Activated T-helper 2 cell treated with anti-CD3 and anti-CD28 coated beads, Interferon-gamma antibody, Interleukin-2, Interleukin-4, amounts not matched to agents 10 μg/mL and 5 μg/mL and 100 μg/mL, durations not matched to agents 14 hours and 24 hours and 36 hours (primary cell): ENCODE measurements at regions of chr11 and their contacts with region 1.

Region 1: GRCh38 chr11:119067371-119068222 is at the start of gene VPS11:
- DNase-seq: peak; percentile 98
- H3K4me3 Mint-ChIP-seq: peak within 1 kb of the TSS; percentile 92
- H3K27ac Mint-ChIP-seq: peak within 1 kb of the TSS; percentile 97
- H3K4me1 Mint-ChIP-seq: peaks cover 23% of the 10 kb centered on the region
- H3K27me3 Mint-ChIP-seq: no peaks in the 10 kb centered on the region
- total RNA-seq, gene VPS11: 24.3 and 25.8 TPM in 2 replicates

Region 2: DNA sequence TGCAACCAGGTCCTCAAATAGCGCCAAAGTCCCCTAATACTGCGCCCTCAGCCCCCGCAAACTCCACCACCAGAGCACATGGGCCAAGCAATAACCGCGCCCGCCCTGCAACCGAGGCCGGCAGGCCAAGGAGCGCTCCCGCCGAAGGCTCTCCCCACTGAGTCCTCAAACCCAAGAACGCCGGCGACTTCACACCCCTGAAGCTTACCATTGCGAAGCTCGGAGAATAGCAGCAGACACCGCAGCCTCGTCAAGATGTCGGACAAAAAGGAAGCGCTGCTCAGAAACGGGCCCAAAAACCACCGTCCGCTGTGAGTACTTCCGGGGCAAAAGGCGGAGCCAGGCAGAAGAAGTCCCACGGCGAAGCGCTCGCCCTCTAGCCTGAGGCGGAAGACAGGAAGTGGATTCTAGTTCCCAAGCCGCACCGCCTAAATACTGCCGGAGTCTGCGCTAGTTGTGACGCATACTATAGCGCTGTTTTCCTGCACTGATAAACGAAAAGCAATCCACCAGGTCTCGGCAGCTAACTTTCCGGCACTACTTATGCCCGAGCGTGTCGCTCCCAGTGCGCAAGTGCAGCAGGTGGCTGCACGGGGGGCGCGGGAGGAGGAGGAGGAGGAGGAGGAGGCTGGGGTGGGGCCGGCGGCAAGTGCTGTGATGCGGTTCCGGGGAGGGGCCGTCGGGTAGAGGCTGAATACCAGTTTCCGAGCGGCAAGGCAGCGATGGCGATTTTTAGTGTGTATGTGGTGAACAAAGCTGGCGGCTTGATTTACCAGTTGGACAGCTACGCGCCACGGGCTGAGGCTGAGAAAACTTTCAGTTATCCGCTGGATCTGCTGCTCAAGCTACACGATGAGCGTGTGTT is 49.3 kb before region 1 on chr11 and contains the starts of genes RPS25 and TRAPPC4:
- intact Hi-C with region 1: loop called (anchors 1 kb)
- DNase-seq: peak; percentile 93
- H3K4me3 Mint-ChIP-seq: peak within 1 kb of the TSS; percentile 99
- H3K27ac Mint-ChIP-seq: peak within 1 kb of the TSS; percentile 100
- H3K4me1 Mint-ChIP-seq: peaks cover 25% of the 10 kb centered on the region
- H3K27me3 Mint-ChIP-seq: no peaks in the 10 kb centered on the region
- total RNA-seq, gene RPS25: 1,728 and 1,773 TPM in 2 replicates
- total RNA-seq, gene TRAPPC4: 121 and 128 TPM in 2 replicates

Region 3: GRCh38 chr11:119057000-119057769 is 10.4 kb before region 1 on chr11 and contains the start of gene HYOU1:
- intact Hi-C with region 1: loop called (anchors 1 kb)
- DNase-seq: peak; percentile 97
- H3K4me3 Mint-ChIP-seq: peak within 1 kb of the TSS; percentile 98
- H3K27ac Mint-ChIP-seq: peak within 1 kb of the TSS; percentile 99
- H3K4me1 Mint-ChIP-seq: peaks cover 28% of the 10 kb centered on the region
- H3K27me3 Mint-ChIP-seq: no peaks in the 10 kb centered on the region
- total RNA-seq, gene HYOU1: 215 and 226 TPM in 2 replicates

Region 4: GRCh38 chr11:119101759-119102423 is 34.3 kb after region 1 on chr11 and contains the start of gene DPAGT1:
- intact Hi-C with region 1: loop called (anchors 1 kb)
- DNase-seq: peak; percentile 84
- H3K4me3 Mint-ChIP-seq: peak within 1 kb of the TSS; percentile 91
- H3K27ac Mint-ChIP-seq: peak within 1 kb of the TSS; percentile 98
- H3K4me1 Mint-ChIP-seq: peaks cover 32% of the 10 kb centered on the region
- H3K27me3 Mint-ChIP-seq: no peaks in the 10 kb centered on the region
- total RNA-seq, gene DPAGT1: 82.2 and 83.4 TPM in 2 replicates

Region 5: GRCh38 chr11:119175493-119176077 is 108.0 kb after region 1 on chr11:
- intact Hi-C with region 1: no loop called
- DNase-seq: no peak
- H3K4me3 Mint-ChIP-seq: no peak overlapping the region
- H3K27ac Mint-ChIP-seq: no peak overlapping the region
- H3K4me1 Mint-ChIP-seq: peaks cover 17% of the 10 kb centered on the region
- H3K27me3 Mint-ChIP-seq: no peaks in the 10 kb centered on the region

Region 6: GRCh38 chr11:119196833-119197483 is 129.4 kb after region 1 on chr11:
- intact Hi-C with region 1: loop called (anchors 1 kb)
- DNase-seq: peak; percentile 52
- H3K4me3 Mint-ChIP-seq: no peak overlapping the region
- H3K27ac Mint-ChIP-seq: no peak overlapping the region
- H3K4me1 Mint-ChIP-seq: peaks cover 2% of the 10 kb centered on the region
- H3K27me3 Mint-ChIP-seq: peaks cover 10% of the 10 kb centered on the region